ENCODE measurements at regions of chr2 and their contacts with region 1.

Region 1: GRCh38 chr2:203286532-203286931 is 41.7 kb upstream of the ABI2 start:
- DNase-seq: no peak
- ATAC-seq: no peak
- H3K4me3 ChIP-seq: no peak overlapping the region
- H3K27ac ChIP-seq: no peak overlapping the region
- H3K4me1 ChIP-seq: no peaks in the 10 kb centered on the region
- H3K27me3 ChIP-seq: no peaks in the 10 kb centered on the region
- CTCF ChIP-seq: no peak
- POLR2A ChIP-seq: no peak
- RAD21 ChIP-seq: no peak

Region 2: GRCh38 chr2:203276114-203276513 is 10.4 kb before region 1 on chr2:
- CTCF ChIA-PET with region 1: no interaction called
- POLR2A ChIA-PET with region 1: no interaction called
- dilution Hi-C with region 1: no loop called
- in situ Hi-C with region 1: no loop called
- intact Hi-C with region 1: no loop called
- DNase-seq: no peak
- ATAC-seq: no peak
- H3K4me3 ChIP-seq: no peak overlapping the region
- H3K27ac ChIP-seq: no peak overlapping the region
- H3K4me1 ChIP-seq: no peaks in the 10 kb centered on the region
- H3K27me3 ChIP-seq: no peaks in the 10 kb centered on the region
- CTCF ChIP-seq: no peak
- POLR2A ChIP-seq: no peak
- RAD21 ChIP-seq: no peak

Region 3: GRCh38 chr2:203347375-203347774 is 60.8 kb after region 1 on chr2:
- CTCF ChIA-PET with region 1: no interaction called
- POLR2A ChIA-PET with region 1: no interaction called
- dilution Hi-C with region 1: no loop called
- in situ Hi-C with region 1: no loop called
- intact Hi-C with region 1: no loop called
- DNase-seq: no peak
- ATAC-seq: no peak
- H3K4me3 ChIP-seq: no peak overlapping the region
- H3K27ac ChIP-seq: no peak overlapping the region
- H3K4me1 ChIP-seq: no peaks in the 10 kb centered on the region
- H3K27me3 ChIP-seq: no peaks in the 10 kb centered on the region
- CTCF ChIP-seq: no peak
- POLR2A ChIP-seq: no peak
- RAD21 ChIP-seq: no peak

Region 4: DNA sequence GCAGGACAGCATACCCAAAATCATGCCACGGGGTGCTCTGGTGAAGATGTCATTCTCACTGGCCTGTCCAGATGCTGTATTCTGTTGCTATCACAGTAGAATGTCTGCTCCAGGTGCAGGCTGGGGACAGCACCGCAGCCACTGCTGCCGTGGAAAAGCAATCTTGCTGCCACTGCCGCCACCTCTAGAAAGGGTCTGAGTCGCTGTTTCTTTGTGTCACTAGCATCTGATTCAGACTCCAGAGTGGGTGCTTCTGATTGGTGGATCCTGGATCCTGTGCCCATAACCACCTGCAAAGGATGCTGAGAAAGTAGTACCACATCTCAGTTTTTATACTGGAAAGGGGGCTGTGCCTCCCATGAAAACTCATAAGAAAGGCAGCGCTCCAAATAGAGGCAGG is 535.7 kb after region 1 on chr2:
- CTCF ChIA-PET with region 1: no interaction called
- POLR2A ChIA-PET with region 1: no interaction called
- dilution Hi-C with region 1: no loop called
- in situ Hi-C with region 1: no loop called
- intact Hi-C with region 1: loop called (anchors 1 kb)
- DNase-seq: no peak
- ATAC-seq: no peak
- H3K4me3 ChIP-seq: no peak overlapping the region
- H3K27ac ChIP-seq: no peak overlapping the region
- H3K4me1 ChIP-seq: no peaks in the 10 kb centered on the region
- H3K27me3 ChIP-seq: peaks cover 31% of the 10 kb centered on the region
- CTCF ChIP-seq: no peak
- POLR2A ChIP-seq: no peak
- RAD21 ChIP-seq: no peak

Region 5: GRCh38 chr2:204060841-204061240 is 774.3 kb after region 1 on chr2:
- CTCF ChIA-PET with region 1: no interaction called
- POLR2A ChIA-PET with region 1: no interaction called
- dilution Hi-C with region 1: no loop called
- in situ Hi-C with region 1: no loop called
- intact Hi-C with region 1: no loop called
- DNase-seq: no peak
- ATAC-seq: no peak
- H3K4me3 ChIP-seq: no peak overlapping the region
- H3K27ac ChIP-seq: no peak overlapping the region
- H3K4me1 ChIP-seq: no peaks in the 10 kb centered on the region
- H3K27me3 ChIP-seq: peaks cover 4% of the 10 kb centered on the region; the same call in 1 of the 2 replicates
- CTCF ChIP-seq: no peak
- POLR2A ChIP-seq: no peak
- RAD21 ChIP-seq: no peak